ENCODE measurements at regions of chr14 and their contacts with region 1.

Region 1: DNA sequence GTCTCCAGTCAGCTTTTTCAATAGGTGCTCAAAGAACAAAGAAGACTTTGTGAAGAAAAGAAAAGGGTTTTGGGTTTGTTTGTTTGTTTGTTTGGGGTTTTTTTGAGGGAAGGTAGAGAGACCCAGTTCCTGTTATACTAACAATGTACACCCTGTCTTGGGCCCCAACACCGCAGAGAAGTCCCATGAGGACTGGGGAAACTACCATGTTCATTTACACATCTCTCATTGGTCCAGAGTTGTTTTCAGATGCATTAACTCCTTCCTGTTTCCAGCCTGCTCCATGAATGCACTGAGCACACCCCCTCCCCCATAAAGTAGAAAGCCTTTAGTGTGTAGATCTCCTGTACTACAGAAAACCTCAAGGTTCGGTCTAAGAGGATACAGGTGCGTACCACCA is 51.1 kb upstream of the SLC8A3 start:
- DNase-seq: no peak
- H3K4me3 ChIP-seq: no peak overlapping the region
- H3K27ac ChIP-seq: no peak overlapping the region
- H3K4me1 ChIP-seq: no peaks in the 10 kb centered on the region
- H3K27me3 ChIP-seq: peaks cover 8% of the 10 kb centered on the region
- CTCF ChIP-seq: no peak

Region 2: GRCh38 chr14:70259420-70259819 is 19.6 kb after region 1 on chr14:
- CTCF ChIA-PET with region 1: no interaction called
- POLR2A ChIA-PET with region 1: interaction called, 12 read pairs
- intact Hi-C with region 1: no loop called
- DNase-seq: no peak
- H3K4me3 ChIP-seq: no peak overlapping the region
- H3K27ac ChIP-seq: no peak overlapping the region
- H3K4me1 ChIP-seq: no peaks in the 10 kb centered on the region
- H3K27me3 ChIP-seq: peaks cover 45% of the 10 kb centered on the region
- CTCF ChIP-seq: no peak

Region 3: DNA sequence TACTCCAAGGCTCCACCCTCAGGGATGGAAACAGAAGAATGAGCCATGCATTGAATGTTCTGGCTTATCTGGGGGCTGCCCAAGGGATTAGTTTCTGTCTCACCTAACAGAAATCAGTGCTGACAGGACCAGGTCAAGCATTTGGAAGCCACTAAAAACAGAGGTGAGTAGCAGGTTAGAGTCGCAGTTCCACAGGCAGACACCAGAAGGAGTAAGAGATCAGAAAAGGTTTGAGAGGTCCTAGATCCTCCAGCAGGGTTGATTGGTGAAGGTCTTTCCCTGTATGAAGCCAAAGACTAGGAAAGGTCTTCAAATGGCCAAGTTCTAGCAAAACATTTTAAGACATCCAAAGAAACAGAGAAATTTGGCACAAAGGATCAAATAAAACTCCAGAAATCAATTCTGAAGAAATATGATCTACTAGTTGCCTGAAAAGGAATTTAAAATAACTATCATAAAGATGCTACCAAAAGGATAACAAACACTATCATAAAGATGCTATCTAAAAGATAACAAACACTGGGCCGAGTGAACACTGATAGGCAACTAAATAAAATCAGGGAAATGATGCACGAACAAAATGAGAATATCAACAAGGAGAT is 382.4 kb after region 1 on chr14:
- CTCF ChIA-PET with region 1: no interaction called
- POLR2A ChIA-PET with region 1: no interaction called
- intact Hi-C with region 1: no loop called
- DNase-seq: peak; percentile 57
- H3K4me3 ChIP-seq: no peak overlapping the region
- H3K27ac ChIP-seq: no peak overlapping the region
- H3K4me1 ChIP-seq: no peaks in the 10 kb centered on the region
- H3K27me3 ChIP-seq: no peaks in the 10 kb centered on the region
- CTCF ChIP-seq: peak; percentile 77

Measured in A673 (cell line).